ENCODE measurements at regions of chrX and their contacts with region 1.

Region 1: GRCh38 chrX:12946838-12947544 is 27.9 kb upstream of the TMSB4X start:
- DNase-seq: peak; percentile 66 to 86 (median 78)
- H3K4me3 ChIP-seq: no peak overlapping the region
- H3K27ac ChIP-seq: no peak overlapping the region
- H3K4me1 ChIP-seq: peaks cover 17 to 41% (median 28%) of the 10 kb centered on the region in 4 experiments
- H3K27me3 ChIP-seq: peaks cover 0 to 6% (median 0%) of the 10 kb centered on the region in 5 experiments

Region 2: DNA sequence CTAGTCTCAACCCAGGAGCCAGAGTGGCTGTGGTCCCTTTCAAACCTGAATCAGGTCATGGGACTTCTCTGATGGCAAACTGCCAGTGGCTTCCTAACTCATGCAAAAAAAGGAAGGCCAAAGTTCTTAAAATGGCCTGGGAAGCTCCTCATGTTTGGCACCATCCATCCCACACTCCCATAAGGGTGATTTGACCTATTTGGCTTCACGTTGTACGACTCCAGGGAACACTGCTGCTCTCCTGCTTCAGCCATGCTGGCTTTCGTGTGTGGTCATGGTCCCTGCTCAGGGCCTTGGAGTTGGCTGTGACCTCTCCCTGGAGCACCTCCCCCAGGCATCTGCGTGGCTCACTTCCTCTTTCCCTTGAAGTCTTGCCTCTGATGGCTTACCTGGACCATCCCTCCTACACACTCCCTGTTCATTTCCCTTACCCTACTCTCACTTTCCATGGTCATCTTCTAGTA is 15.1 kb after region 1 on chrX:
- CTCF ChIA-PET with region 1: interaction called, 16 read pairs
- POLR2A ChIA-PET with region 1: interaction called, 3 read pairs
- DNase-seq: no peak
- H3K4me3 ChIP-seq: no peak overlapping the region
- H3K27ac ChIP-seq: no peak overlapping the region
- H3K4me1 ChIP-seq: peaks cover 18 to 40% (median 30%) of the 10 kb centered on the region in 4 experiments
- H3K27me3 ChIP-seq: peaks cover 0 to 3% (median 0%) of the 10 kb centered on the region in 5 experiments

Region 3: GRCh38 chrX:12974796-12975669 is 28.0 kb after region 1 on chrX and contains the start of gene TMSB4X:
- CTCF ChIA-PET with region 1: interaction called, 32 read pairs
- POLR2A ChIA-PET with region 1: interaction called, 5 read pairs
- DNase-seq: peak; percentile 76 to 86 (median 80)
- H3K4me3 ChIP-seq: peak within 1 kb of the TSS; percentile 68 to 92 (median 81)
- H3K27ac ChIP-seq: peak within 1 kb of the TSS; percentile 80 to 93
- H3K4me1 ChIP-seq: peaks cover 21 to 63% (median 39%) of the 10 kb centered on the region in 4 experiments
- H3K27me3 ChIP-seq: peaks cover 0 to 46% (median 0%) of the 10 kb centered on the region in 5 experiments

Region 4: GRCh38 chrX:13487731-13488523 is 540.9 kb after region 1 on chrX:
- CTCF ChIA-PET with region 1: interaction called, 18 read pairs
- POLR2A ChIA-PET with region 1: no interaction called
- DNase-seq: peak; percentile 61 to 77 (median 72)
- H3K4me3 ChIP-seq: peak overlapping the region in 1 of 7 experiments; percentile 11
- H3K27ac ChIP-seq: no peak overlapping the region
- H3K4me1 ChIP-seq: peaks cover 9 to 11% (median 10%) of the 10 kb centered on the region in 4 experiments
- H3K27me3 ChIP-seq: peaks cover 0 to 3% (median 0%) of the 10 kb centered on the region in 5 experiments